ENCODE measurements at regions of chr13 and their contacts with region 1.

Region 1: GRCh38 chr13:30465585-30466357 is at the start of gene HMGB1:
- DNase-seq: peak; percentile 99
- H3K4me3 ChIP-seq: peak within 1 kb of the TSS; percentile 91 to 98
- H3K27ac ChIP-seq: peak within 1 kb of the TSS; percentile 99
- H3K4me1 ChIP-seq: peaks cover 3% of the 10 kb centered on the region
- H3K27me3 ChIP-seq: no peaks in the 10 kb centered on the region
- CTCF ChIP-seq: peak in 1 of 4 experiments; percentile 27
- POLR2A ChIP-seq: peak; percentile 100
- total RNA-seq, gene HMGB1: 264 to 274 TPM

Region 2: GRCh38 chr13:29850224-29850898 is 615.4 kb before region 1 on chr13 and contains the start of gene UBL3:
- intact Hi-C with region 1: loop called (anchors 10 kb)
- DNase-seq: peak; percentile 98
- H3K4me3 ChIP-seq: peak within 1 kb of the TSS; percentile 67 to 68
- H3K27ac ChIP-seq: peak within 1 kb of the TSS; percentile 97 to 99
- H3K4me1 ChIP-seq: no peaks in the 10 kb centered on the region
- H3K27me3 ChIP-seq: no peaks in the 10 kb centered on the region
- CTCF ChIP-seq: no peak
- POLR2A ChIP-seq: peak; percentile 94
- total RNA-seq, gene UBL3: 36.3 to 38.2 TPM

Region 3: GRCh38 chr13:30306762-30307193 is 159.0 kb before region 1 on chr13:
- intact Hi-C with region 1: loop called (anchors 5 kb)
- DNase-seq: peak; percentile 93
- H3K4me3 ChIP-seq: peak overlapping the region; percentile 95 to 98
- H3K27ac ChIP-seq: peak overlapping the region; percentile 89
- H3K4me1 ChIP-seq: no peaks in the 10 kb centered on the region
- H3K27me3 ChIP-seq: no peaks in the 10 kb centered on the region
- CTCF ChIP-seq: no peak
- POLR2A ChIP-seq: no peak

Region 4: DNA sequence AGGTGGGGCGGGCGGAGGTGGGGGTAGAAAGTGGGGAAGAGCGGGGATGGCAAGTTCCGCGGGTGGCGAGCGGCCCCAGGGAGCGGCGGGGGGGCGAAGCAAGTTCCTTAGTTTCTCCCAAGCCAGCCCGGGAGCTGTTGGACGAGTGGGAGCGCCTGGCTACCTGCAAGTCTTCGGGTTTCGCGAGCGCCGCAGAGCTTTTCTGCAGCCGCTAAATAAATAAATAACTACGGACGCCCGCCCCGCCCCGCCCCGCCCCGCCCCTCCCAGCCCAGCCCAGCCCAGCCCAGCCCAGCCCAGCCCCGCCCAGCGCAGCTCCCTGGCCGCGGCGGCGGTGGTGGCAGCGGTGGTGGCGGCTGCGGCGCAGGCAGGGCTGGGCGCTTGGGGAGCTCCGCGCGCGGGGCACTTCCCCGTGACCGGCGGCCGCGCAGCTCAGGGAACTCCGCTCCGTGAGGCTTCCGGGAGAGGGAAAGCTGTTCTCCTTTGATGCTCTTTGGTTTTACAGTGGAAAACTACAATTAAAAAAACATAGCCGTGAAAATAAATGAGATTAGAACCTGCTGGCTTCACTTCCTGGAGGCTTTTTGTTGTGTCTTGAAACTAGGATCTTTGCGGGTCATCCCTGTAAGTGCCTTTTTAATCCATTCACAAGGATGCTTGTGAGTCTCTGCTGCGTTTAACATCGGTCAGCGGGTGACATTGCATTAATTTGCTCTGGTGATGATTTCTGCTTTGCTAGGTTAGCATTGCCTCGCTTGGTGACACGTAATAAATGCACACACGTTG is 43.5 kb before region 1 on chr13 and contains the start of gene UBE2L5:
- intact Hi-C with region 1: loop called (anchors 2 kb)
- DNase-seq: peak; percentile 82
- H3K4me3 ChIP-seq: peak within 1 kb of the TSS; percentile 41 to 54
- H3K27ac ChIP-seq: peak within 1 kb of the TSS; percentile 96 to 98
- H3K4me1 ChIP-seq: no peaks in the 10 kb centered on the region
- H3K27me3 ChIP-seq: no peaks in the 10 kb centered on the region
- CTCF ChIP-seq: no peak
- POLR2A ChIP-seq: peak; percentile 79
- total RNA-seq, gene UBE2L5: 0.18 to 5.2 TPM

Region 5: DNA sequence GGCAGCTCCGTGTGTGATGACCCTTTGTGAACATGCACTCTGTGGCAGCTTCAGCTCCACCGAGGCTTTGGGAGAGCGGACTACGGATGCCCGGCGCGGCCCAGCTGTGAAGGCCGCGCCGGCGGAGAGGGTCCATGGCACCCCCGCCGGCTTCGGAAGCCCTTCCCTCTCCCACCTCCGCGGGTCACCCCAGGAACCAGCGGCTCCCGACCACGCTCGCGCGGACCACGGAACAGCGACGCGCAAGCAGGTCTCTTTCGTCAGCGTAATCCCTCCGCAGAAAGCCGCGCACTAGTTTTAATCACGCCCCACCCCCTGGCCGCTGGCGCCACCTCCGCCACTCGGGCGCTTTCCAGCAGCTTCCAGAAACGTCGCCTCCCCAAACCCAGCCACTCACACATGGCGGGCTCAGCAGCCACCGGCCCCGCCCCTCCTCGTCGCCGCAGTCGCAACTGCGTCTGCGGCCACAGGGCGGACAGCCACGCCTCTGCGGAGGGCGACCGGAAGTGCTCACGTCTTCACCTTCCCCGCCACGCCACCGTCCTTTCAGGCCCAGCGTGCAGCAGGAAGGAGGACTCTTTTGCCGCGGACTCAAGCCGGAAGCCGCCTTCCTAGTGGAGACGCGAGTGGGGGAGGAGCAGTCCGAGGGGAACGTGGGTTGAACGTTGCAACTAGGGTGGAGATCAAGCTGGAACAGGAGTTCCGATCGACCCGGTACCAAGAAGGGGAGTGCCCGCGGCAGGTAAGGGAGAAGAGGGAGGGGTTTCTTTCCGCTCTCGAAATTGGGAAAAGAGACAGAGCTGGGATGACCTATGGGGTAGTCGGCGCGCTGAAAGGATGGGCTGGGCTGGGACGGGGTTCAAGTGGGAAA is 151.8 kb after region 1 on chr13 and contains the start of gene USPL1:
- intact Hi-C with region 1: loop called (anchors 2 kb)
- DNase-seq: peak; percentile 97
- H3K4me3 ChIP-seq: peak within 1 kb of the TSS; percentile 61 to 68
- H3K27ac ChIP-seq: peak within 1 kb of the TSS; percentile 100
- H3K4me1 ChIP-seq: no peaks in the 10 kb centered on the region
- H3K27me3 ChIP-seq: no peaks in the 10 kb centered on the region
- CTCF ChIP-seq: peak in 3 of 4 experiments; percentile 26 to 91 (median 74)
- POLR2A ChIP-seq: peak; percentile 96
- total RNA-seq, gene USPL1: 20.1 to 24.4 TPM

Region 6: GRCh38 chr13:30865123-30866049 is 399.6 kb after region 1 on chr13:
- intact Hi-C with region 1: loop called (anchors 5 kb)
- DNase-seq: peak; percentile 81
- H3K4me3 ChIP-seq: no peak overlapping the region
- H3K27ac ChIP-seq: peak overlapping the region; percentile 66 to 75
- H3K4me1 ChIP-seq: peaks cover 2% of the 10 kb centered on the region
- H3K27me3 ChIP-seq: no peaks in the 10 kb centered on the region
- CTCF ChIP-seq: peak; percentile 63 to 94 (median 79)
- POLR2A ChIP-seq: peak; percentile 9